ENCODE measurements at regions of chr5 and their contacts with region 1.

Region 1: GRCh38 chr5:167582283-167582682 is 709.2 kb upstream of the WWC1 start:
- DNase-seq: peak; percentile 63
- H3K4me3 ChIP-seq: peak overlapping the region; percentile 8
- H3K27ac ChIP-seq: peak overlapping the region; percentile 59
- H3K4me1 ChIP-seq: peaks cover 73% of the 10 kb centered on the region
- H3K27me3 ChIP-seq: no peaks in the 10 kb centered on the region
- CTCF ChIP-seq: peak; percentile 52

Region 2: GRCh38 chr5:167777746-167778145 is 195.5 kb after region 1 on chr5:
- CTCF ChIA-PET with region 1: no interaction called
- POLR2A ChIA-PET with region 1: no interaction called
- intact Hi-C with region 1: no loop called
- DNase-seq: no peak
- H3K4me3 ChIP-seq: no peak overlapping the region
- H3K27ac ChIP-seq: peak overlapping the region; percentile 41
- H3K4me1 ChIP-seq: peaks cover 39% of the 10 kb centered on the region
- H3K27me3 ChIP-seq: no peaks in the 10 kb centered on the region
- CTCF ChIP-seq: no peak

Region 3: DNA sequence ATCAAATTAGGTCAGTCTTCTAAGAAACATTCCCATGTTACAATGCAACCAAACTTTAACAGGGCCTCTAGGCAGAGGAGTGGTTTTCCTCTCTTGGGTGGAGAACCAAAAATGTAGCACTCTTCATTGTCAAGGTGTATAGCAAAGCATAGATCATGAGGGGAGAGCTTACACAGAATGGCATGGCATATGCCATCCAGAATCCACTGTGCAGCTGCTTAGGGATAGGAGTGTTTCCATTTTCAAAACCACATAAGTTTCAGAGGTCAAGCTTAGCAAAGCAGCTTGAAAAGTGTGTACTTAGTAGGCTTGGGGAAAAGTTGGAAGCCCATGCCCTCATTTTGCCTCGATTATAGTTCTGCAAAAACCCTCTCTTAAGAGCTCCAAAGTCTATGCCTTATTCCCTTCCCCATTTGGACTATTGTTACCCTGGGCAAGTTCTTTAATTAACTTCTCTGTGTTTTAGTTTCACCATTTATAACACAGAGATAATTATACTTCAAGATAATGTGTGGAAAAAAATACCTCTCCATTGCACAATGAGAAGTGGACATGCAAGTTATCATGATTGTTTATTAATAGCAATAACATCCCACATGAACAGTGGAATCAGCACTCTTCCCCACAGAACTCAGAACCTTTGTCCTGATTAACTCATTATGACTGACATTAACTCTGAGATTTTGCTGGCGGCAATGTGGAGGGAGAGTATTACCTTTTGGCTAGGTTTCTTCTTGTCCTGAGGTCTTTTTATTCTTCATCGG is 310.3 kb after region 1 on chr5:
- CTCF ChIA-PET with region 1: no interaction called
- POLR2A ChIA-PET with region 1: interaction called, 8 read pairs
- intact Hi-C with region 1: loop called (anchors 1 kb)
- DNase-seq: no peak
- H3K4me3 ChIP-seq: no peak overlapping the region
- H3K27ac ChIP-seq: peak overlapping the region; percentile 93
- H3K4me1 ChIP-seq: peaks cover 67% of the 10 kb centered on the region
- H3K27me3 ChIP-seq: no peaks in the 10 kb centered on the region
- CTCF ChIP-seq: no peak

Region 4: DNA sequence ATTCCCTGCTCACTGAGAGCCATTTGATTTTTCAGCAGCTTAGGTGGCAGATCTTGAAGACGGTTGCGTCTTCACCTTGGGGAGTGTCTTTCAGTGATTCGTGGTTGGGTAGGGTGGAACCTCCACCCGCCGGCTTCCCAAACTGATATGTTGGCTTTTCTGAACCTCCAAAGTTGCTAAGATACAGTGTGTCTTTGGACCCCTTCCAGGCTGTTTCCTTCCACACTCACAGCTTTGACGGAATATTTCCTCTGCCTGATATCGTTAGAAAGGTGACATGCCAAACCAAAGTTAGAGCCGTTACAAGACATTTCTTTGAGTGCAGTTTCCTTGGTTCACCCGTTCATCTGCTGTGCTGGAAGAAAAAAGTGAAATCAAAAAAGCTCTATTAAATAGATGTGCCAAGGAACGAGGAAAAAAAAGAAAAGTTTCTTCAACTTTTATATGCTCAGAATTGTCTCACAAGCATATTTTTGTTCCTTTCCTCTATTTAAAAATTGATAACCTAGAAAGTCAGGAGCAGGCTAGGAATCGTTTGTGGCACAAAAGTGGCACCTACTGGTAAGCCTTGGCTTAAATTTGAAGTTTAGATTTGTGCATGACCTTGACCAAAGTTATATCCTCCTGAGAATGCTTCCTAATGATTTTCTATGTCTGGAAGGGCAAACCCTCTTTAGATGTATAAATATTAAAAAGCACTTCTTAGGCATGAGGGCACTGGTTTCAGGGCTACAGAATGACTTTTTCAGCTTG is 438.4 kb after region 1 on chr5:
- CTCF ChIA-PET with region 1: no interaction called
- POLR2A ChIA-PET with region 1: no interaction called
- intact Hi-C with region 1: loop called (anchors 2 kb)
- DNase-seq: peak; percentile 41
- H3K4me3 ChIP-seq: no peak overlapping the region
- H3K27ac ChIP-seq: peak overlapping the region; percentile 4
- H3K4me1 ChIP-seq: peaks cover 62% of the 10 kb centered on the region
- H3K27me3 ChIP-seq: no peaks in the 10 kb centered on the region
- CTCF ChIP-seq: peak; percentile 47

Region 5: GRCh38 chr5:168086104-168086610 is 503.9 kb after region 1 on chr5:
- CTCF ChIA-PET with region 1: no interaction called
- POLR2A ChIA-PET with region 1: no interaction called
- intact Hi-C with region 1: loop called (anchors 5 kb)
- DNase-seq: peak; percentile 95
- H3K4me3 ChIP-seq: no peak overlapping the region
- H3K27ac ChIP-seq: peak overlapping the region; percentile 96
- H3K4me1 ChIP-seq: peaks cover 52% of the 10 kb centered on the region
- H3K27me3 ChIP-seq: no peaks in the 10 kb centered on the region
- CTCF ChIP-seq: peak; percentile 44